ENCODE measurements at regions of chr3 and their contacts with region 1.

Region 1: DNA sequence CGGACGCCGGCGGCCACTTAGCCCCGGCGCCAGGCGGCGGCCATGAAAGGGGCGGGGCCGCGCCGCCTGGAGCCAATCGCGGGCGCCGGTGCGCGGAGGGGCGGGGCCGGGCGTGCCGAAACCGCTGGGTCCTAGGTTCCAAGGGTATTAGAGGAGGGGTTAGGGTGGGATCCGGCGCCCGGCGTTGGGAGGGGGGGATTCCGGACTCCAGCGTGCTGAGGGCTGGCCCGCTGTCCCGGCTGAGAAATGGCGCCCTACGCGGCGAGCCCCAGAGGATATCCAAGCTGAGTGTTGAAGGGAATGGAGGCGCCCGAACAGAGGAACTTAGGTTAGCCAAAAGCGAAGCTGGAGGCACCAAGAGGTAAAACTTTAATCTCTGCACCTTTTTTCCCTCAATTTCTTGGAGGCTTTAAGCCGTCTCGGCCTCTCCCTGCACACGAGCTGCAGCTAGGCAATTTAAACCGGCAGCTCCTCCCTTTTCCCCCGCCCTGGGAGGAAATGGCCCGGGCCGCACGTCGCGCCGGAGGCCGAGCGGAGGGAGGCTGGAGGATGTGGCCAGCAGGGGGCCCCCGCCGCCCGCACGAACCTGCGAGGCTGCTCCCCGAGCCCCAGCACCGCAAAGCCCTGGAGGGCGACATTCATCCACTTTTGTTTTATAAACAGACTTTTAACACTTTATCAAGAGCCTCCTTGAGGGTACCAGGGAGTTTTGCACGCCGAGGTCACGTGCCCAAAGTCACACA is at the start of gene XXYLT1:
- DNase-seq: peak; percentile 82 to 94 (median 88)
- ATAC-seq: peak; percentile 84
- H3K4me3 ChIP-seq: peak within 1 kb of the TSS; percentile 69
- H3K4me3 Mint-ChIP-seq: peak within 1 kb of the TSS; percentile 95
- H3K27ac ChIP-seq: peak within 1 kb of the TSS in 1 of 2 donors; percentile 38
- H3K27ac Mint-ChIP-seq: peak within 1 kb of the TSS; percentile 80
- H3K4me1 ChIP-seq: peaks cover 31% of the 10 kb centered on the region
- H3K4me1 Mint-ChIP-seq: peaks cover 15% of the 10 kb centered on the region
- H3K27me3 ChIP-seq: no peaks in the 10 kb centered on the region
- H3K27me3 Mint-ChIP-seq: no peaks in the 10 kb centered on the region
- CTCF ChIP-seq: peak; percentile 88
- total RNA-seq, gene XXYLT1: 3.1 to 3.7 TPM

Region 2: DNA sequence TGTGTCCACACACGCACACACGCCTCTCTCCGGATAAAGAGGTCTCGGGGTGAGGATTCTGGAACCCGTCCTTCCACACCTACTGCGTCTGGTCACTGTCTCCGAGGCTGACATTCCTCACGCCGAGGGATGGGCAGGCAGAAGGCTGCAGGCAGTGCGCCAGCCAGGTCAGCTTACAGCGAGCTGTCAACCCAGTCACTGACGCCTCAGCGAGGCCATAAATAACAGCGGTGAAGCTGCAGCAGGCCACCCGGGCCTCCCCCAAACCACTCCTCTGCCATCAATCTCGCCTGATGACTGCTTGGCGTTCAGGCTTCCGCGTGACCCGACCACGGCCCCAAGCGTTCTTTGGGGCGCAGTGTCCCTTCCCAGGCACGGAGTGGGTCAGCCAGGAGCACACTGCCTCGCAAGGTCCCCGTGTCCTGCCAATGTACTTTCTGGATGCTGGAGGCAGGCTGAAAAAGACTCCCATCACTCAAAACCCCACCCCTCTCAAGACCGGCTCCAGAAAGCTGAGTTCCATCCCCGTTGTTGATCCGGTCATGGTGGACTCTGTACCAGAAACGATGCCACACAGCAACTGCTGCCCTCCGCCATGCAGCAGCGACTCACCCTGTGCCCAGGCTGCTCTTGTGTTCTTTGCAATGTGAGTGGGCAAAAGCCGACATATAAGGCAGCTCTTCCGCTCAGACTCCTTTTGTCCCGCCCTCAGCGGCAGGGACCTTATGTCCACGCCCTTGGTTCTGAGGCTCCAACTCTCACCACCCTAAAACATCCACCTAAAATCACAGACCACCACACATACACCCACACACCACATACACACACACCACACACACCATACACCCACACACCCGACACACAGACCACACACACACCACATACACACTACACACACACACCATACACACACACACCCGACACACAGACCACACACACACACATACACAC is 947.2 kb before region 1 on chr3:
- CTCF ChIA-PET with region 1: no interaction called
- POLR2A ChIA-PET with region 1: no interaction called
- intact Hi-C with region 1: no loop called
- DNase-seq: peak in 8 of 14 experiments; percentile 17 to 68 (median 40)
- ATAC-seq: peak; percentile 83
- H3K4me3 ChIP-seq: peak overlapping the region; percentile 46
- H3K4me3 Mint-ChIP-seq: no peak overlapping the region
- H3K27ac ChIP-seq: no peak overlapping the region
- H3K27ac Mint-ChIP-seq: no peak overlapping the region
- H3K4me1 ChIP-seq: peaks cover 13% of the 10 kb centered on the region
- H3K4me1 Mint-ChIP-seq: no peaks in the 10 kb centered on the region
- H3K27me3 ChIP-seq: no peaks in the 10 kb centered on the region
- H3K27me3 Mint-ChIP-seq: peaks cover 3% of the 10 kb centered on the region
- CTCF ChIP-seq: no peak

Region 3: DNA sequence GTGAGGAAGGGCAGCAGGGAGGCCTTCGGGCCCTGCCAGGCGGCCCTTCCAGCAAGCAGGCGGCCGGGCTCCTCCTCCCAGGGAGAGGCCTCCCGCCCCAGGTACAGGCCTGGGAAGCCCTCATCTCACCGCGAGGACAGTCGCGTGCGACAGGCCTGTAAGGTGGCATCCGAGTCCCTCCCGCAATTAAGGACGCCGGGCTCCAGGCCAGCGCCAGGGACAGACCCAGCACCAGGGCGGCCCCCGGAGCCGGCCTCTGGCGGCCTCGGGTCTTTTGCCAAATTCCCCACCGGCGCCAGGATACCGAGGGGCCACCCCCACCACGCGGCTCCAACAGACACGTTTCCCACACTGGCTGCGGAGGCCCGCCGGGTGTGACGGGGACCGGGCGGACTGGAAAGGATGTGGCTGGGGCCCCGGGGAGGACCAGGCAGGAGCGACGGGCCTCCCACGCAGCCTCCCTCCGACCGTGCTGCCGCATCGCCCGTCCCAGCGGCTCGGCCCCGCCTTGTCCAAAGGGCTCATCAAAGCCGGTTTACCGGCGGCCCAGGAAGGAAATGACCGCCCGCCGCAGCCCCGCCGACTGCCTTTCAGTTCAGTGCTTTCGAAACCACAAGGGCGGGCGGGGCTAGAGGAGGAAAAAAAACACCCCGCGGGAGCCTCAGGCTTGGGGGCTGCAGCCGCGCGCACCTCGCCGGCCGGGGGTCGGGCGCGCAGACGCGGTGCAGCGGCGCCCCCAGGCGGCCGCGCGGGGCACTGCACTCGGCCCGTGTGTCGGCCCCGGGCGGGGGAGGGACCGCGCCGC is 11.6 kb before region 1 on chr3:
- CTCF ChIA-PET with region 1: interaction called, 62 read pairs
- POLR2A ChIA-PET with region 1: interaction called, 20 read pairs
- intact Hi-C with region 1: loop called in 1 of 2 experiments (anchors 1 kb)
- DNase-seq: peak; percentile 73 to 96 (median 84)
- ATAC-seq: peak; percentile 83
- H3K4me3 ChIP-seq: peak overlapping the region; percentile 92
- H3K4me3 Mint-ChIP-seq: peak overlapping the region; percentile 67
- H3K27ac ChIP-seq: peak overlapping the region; percentile 85 to 93
- H3K27ac Mint-ChIP-seq: peak overlapping the region; percentile 93
- H3K4me1 ChIP-seq: peaks cover 35% of the 10 kb centered on the region
- H3K4me1 Mint-ChIP-seq: peaks cover 22% of the 10 kb centered on the region
- H3K27me3 ChIP-seq: no peaks in the 10 kb centered on the region
- H3K27me3 Mint-ChIP-seq: no peaks in the 10 kb centered on the region
- CTCF ChIP-seq: peak; percentile 33

Region 4: GRCh38 chr3:195508185-195508584 is 236.9 kb after region 1 on chr3:
- CTCF ChIA-PET with region 1: interaction called, 10 read pairs
- POLR2A ChIA-PET with region 1: interaction called, 5 read pairs
- intact Hi-C with region 1: no loop called
- DNase-seq: peak in 2 of 14 experiments; percentile 1 to 4
- ATAC-seq: no peak
- H3K4me3 ChIP-seq: no peak overlapping the region
- H3K4me3 Mint-ChIP-seq: no peak overlapping the region
- H3K27ac ChIP-seq: no peak overlapping the region
- H3K27ac Mint-ChIP-seq: peak overlapping the region; percentile 58
- H3K4me1 ChIP-seq: peaks cover 4% of the 10 kb centered on the region
- H3K4me1 Mint-ChIP-seq: peaks cover 19% of the 10 kb centered on the region
- H3K27me3 ChIP-seq: no peaks in the 10 kb centered on the region
- H3K27me3 Mint-ChIP-seq: no peaks in the 10 kb centered on the region
- CTCF ChIP-seq: no peak

Region 5: DNA sequence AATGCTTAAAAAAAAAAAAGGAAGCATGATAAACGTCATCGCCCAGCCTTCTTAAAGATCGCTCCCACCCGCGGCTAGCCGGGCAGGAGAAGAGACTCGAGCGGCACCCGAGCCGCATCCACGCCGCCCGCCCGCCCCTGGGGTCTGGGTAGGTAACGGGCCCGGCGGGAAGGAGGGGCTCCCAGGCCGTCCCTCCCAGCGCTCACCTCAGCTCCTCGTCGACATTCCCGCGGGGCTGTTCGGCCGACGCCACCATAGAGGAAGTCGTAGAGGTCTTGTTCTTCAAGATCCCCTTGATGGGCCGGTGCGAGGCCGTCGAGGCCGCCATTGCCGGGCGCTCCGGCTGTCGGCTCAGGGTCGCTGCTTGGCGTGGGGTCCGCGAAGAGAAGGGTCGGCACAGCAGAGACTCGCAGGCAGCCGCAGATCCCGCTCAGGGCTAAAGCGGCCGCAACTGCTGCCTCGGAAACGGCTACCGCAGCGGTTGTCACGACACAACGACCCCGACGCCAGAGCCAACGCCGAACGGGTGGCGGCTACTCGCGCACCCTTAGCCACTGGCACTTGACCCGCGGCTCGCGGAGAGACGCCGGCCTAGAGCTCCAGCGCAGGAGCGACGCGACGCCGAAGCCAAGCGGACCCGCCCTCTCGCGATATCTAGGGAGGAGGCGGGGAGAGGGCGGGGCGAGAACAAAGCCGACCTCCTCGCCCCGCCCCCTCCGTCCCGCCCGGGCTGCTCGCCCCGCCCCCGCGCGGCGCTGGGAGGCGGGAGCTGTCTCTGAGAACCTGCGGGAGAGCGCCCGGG is 271.6 kb after region 1 on chr3 and contains the start of gene PPP1R2:
- CTCF ChIA-PET with region 1: interaction called, 9 read pairs
- POLR2A ChIA-PET with region 1: interaction called, 15 read pairs
- intact Hi-C with region 1: loop called in 1 of 2 experiments (anchors 2 kb)
- DNase-seq: peak; percentile 82 to 97 (median 91)
- ATAC-seq: peak; percentile 80
- H3K4me3 ChIP-seq: peak within 1 kb of the TSS; percentile 70
- H3K4me3 Mint-ChIP-seq: peak within 1 kb of the TSS; percentile 88
- H3K27ac ChIP-seq: peak within 1 kb of the TSS; percentile 95 to 96
- H3K27ac Mint-ChIP-seq: peak within 1 kb of the TSS; percentile 93
- H3K4me1 ChIP-seq: peaks cover 52% of the 10 kb centered on the region
- H3K4me1 Mint-ChIP-seq: peaks cover 76% of the 10 kb centered on the region
- H3K27me3 ChIP-seq: no peaks in the 10 kb centered on the region
- H3K27me3 Mint-ChIP-seq: no peaks in the 10 kb centered on the region
- CTCF ChIP-seq: no peak
- total RNA-seq, gene PPP1R2: 205 to 210 TPM

Region 6: DNA sequence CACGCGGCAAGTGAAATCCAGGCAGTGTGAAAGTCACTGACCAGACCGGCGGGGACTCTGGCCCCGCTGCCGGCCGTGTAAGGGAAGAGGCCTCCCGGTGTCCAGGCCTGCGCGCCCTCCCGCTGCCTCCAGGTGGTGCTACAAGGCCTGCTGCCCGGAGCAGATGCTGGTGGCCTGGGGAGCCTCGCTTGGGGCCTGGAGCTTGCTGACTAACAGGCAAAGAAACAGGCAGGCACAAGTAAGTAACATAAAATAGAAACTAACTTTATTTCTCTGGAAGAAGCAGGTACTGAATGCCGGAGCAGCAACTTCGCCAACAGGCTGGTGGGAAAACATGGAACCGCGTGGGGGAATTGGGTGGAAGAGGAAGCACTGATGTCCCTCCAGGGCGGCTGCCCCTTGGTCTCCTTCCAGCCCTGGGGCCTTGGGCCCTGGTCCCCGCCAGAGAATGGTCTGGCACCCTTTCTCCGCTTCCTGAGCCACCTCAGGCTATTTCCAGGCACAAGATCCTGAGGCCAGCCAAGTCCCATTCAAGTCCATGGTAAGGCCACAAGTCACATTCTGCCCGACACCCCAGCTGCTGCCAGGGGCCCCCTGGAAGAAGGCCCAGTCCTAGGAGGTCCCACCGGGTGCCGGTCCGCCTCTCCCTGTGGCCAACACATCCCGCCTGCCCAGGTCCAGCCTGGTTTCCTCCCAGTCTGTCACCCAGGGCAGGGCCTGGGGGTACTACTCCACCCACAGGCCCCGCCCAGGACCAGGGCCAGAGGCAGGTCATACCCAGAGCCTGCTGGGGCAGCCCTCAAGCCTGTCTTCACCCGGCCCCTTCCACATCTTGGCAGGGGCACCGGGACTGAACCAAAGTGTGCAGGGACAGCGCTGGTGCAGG is 592.1 kb after region 1 on chr3:
- CTCF ChIA-PET with region 1: no interaction called
- POLR2A ChIA-PET with region 1: no interaction called
- intact Hi-C with region 1: loop called (anchors 5 kb)
- DNase-seq: peak; percentile 42 to 76 (median 57)
- ATAC-seq: peak; percentile 78
- H3K4me3 ChIP-seq: no peak overlapping the region
- H3K4me3 Mint-ChIP-seq: no peak overlapping the region
- H3K27ac ChIP-seq: no peak overlapping the region
- H3K27ac Mint-ChIP-seq: no peak overlapping the region
- H3K4me1 ChIP-seq: peaks cover 11% of the 10 kb centered on the region
- H3K4me1 Mint-ChIP-seq: peaks cover 5% of the 10 kb centered on the region
- H3K27me3 ChIP-seq: no peaks in the 10 kb centered on the region
- H3K27me3 Mint-ChIP-seq: no peaks in the 10 kb centered on the region
- CTCF ChIP-seq: peak; percentile 73

Measured in CD4-positive, alpha-beta T cell (primary cell).